K562 (cell line): ENCODE measurements at regions of chrX and their contacts with region 1.

Region 1: DNA sequence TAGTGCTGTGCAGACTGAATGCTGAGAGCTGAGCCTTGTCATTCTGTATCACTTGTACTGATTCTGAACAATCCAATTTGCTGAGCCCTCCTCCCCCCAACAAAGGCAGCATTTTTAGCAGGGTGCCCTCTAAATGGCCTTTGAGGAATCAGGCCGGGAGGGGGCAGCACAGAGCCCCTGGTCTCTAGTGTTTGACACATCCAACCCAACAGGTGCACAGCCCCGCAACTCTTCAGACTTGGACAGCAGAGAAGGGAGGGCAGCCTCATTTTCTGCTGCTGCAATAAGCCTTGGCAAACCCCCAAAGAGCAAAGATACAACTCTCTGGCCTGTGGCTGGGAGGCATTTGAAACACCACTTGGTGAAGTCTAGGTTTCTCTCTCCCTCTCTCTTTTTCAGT is 3.4 kb downstream of the ATP1B4 start:
- DNase-seq: peak; percentile 32 to 62 (median 36)
- ATAC-seq: peak; percentile 94
- H3K4me3 ChIP-seq: no peak overlapping the region
- H3K27ac ChIP-seq: no peak overlapping the region
- H3K4me1 ChIP-seq: peaks cover 0 to 7% of the 10 kb centered on the region in 2 experiments; a peak in 1 of 5 replicates
- H3K27me3 ChIP-seq: no peaks in the 10 kb centered on the region
- CTCF ChIP-seq: peak; percentile 62 to 70 (median 68)
- EP300 ChIP-seq: no peak
- POLR2A ChIP-seq: no peak
- RAD21 ChIP-seq: peak; percentile 18 to 45; a peak in 2 of 4 replicates

Region 2: DNA sequence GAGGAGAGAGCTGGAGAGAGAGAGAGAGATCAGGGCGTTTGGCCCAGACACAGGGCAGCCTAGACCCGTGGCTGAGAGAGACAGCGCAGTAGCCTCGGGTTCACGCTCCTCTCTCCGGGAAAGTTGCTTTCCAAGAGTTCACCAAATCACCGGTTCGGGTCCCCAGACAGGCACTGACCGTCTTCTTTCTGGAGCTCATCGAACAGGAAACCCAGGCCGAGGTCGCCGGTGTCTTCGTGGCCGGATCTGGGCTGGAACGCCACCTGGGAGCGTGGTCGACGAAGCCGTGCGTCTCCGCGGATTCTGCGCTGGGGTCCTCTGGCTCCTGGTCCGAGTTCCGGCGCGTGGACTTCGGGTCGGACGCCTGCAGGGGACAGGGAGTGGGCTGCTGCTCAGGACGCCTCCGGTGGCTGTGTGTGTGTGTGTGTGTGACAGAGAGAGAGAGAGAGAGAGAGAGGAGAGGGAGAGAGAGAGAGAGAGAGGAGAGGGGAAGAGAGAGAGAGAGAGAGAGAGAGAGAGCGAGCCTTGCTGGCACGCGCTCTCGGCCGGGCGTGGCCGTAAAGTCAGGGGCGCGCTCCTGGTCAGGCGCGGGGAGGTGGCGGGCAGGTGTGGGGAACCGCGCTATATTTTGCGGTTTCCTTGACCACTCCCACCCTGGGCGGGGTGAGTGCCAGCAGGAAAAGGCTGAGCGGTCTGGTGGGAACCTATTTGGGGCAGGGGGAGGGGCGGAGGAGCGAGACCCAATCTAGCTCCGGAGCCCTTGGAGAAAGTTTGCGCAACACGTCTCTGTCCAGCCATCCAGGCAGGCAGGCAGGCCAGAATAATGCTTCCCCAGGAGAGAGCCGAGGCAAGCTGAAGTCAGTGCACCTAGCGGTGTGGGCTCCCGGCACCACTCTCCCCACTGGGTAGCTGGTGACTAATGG is 349.9 kb before region 1 on chrX:
- CTCF ChIA-PET with region 1: no interaction called
- POLR2A ChIA-PET with region 1: no interaction called
- in situ Hi-C with region 1: no loop called
- intact Hi-C with region 1: no loop called
- DNase-seq: no peak
- ATAC-seq: no peak
- H3K4me3 ChIP-seq: no peak overlapping the region
- H3K27ac ChIP-seq: no peak overlapping the region
- H3K4me1 ChIP-seq: peaks cover 0 to 8% of the 10 kb centered on the region in 2 experiments; a peak in 2 of 5 replicates
- H3K27me3 ChIP-seq: peaks cover 11 to 43% of the 10 kb centered on the region in 2 experiments; a peak in 3 of 5 replicates
- CTCF ChIP-seq: no peak
- EP300 ChIP-seq: no peak
- POLR2A ChIP-seq: no peak
- RAD21 ChIP-seq: no peak

Region 3: DNA sequence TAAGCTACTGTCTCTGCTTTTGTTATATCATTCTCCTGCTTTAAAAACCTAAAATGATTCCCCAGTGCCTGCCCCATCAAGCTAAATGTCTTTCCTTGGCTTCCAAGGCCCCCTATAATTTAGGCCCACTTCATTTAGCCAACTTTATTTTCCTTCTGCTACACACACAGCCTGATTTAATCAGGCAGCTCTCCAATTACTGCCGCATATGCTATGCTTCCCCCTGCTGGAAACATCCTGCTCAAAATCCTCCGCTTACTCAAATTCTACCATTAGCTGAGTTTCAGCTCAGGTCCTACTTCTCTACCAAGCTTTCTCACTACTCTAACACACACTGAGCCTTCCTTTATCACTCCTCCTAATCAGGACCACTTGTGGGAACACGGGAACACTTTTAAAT is 86.8 kb after region 1 on chrX:
- CTCF ChIA-PET with region 1: no interaction called
- POLR2A ChIA-PET with region 1: interaction called, 3 read pairs
- in situ Hi-C with region 1: no loop called
- intact Hi-C with region 1: loop called (anchors 5 kb)
- DNase-seq: peak in 2 of 4 experiments; percentile 34 to 57
- ATAC-seq: peak; percentile 91
- H3K4me3 ChIP-seq: no peak overlapping the region
- H3K27ac ChIP-seq: peak overlapping the region; percentile 55; the same call in 1 of the 3 replicates
- H3K4me1 ChIP-seq: peaks cover 3 to 19% of the 10 kb centered on the region in 2 experiments; a peak in 4 of 5 replicates
- H3K27me3 ChIP-seq: no peaks in the 10 kb centered on the region
- CTCF ChIP-seq: peak; percentile 54 to 61 (median 57)
- EP300 ChIP-seq: no peak
- POLR2A ChIP-seq: no peak
- RAD21 ChIP-seq: peak; percentile 45 to 49

Region 4: GRCh38 chrX:120468825-120469525 is 103.7 kb after region 1 on chrX and contains the start of gene LAMP2:
- CTCF ChIA-PET with region 1: no interaction called
- POLR2A ChIA-PET with region 1: no interaction called
- in situ Hi-C with region 1: no loop called
- intact Hi-C with region 1: loop called (anchors 5 kb)
- DNase-seq: peak; percentile 89 to 94 (median 90)
- ATAC-seq: peak; percentile 97
- H3K4me3 ChIP-seq: peak within 1 kb of the TSS; percentile 98
- H3K27ac ChIP-seq: peak within 1 kb of the TSS; percentile 91
- H3K4me1 ChIP-seq: peaks cover 8 to 12% of the 10 kb centered on the region in 2 experiments; a peak in 3 of 5 replicates
- H3K27me3 ChIP-seq: no peaks in the 10 kb centered on the region
- CTCF ChIP-seq: no peak
- EP300 ChIP-seq: no peak
- POLR2A ChIP-seq: peak; percentile 89
- RAD21 ChIP-seq: 0 out of 4 replicates have a peak, but pooled peaks of 1 of the 2 experiments have one; percentile 2
- polyA plus RNA-seq, gene LAMP2: 47.7 to 48.6 TPM